ENCODE measurements at regions of chr2 and their contacts with region 1.

Region 1: DNA sequence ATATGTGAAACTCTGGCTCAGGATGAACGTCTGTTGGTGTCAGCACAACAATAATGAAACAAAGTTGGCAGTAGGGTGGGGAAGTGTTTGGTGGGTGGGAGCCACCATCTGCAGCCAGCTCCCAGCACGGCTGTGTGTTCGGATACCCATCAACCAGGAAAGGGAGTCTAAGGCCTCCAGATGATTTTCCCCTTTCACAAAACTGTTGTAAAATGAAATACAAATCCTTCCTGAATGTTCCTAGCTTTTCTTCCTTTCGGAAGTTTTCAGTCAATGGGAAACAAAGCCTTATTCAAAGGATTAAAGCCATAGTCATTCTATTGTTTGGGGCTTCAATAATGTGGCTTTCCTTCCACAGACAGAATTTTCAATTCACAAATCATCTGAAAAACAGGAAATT is 14.5 kb upstream of the DARS1 start:
- DNase-seq: no peak
- ATAC-seq: no peak
- H3K4me3 ChIP-seq: no peak overlapping the region
- H3K27ac ChIP-seq: no peak overlapping the region
- H3K4me1 ChIP-seq: no peaks in the 10 kb centered on the region
- H3K27me3 ChIP-seq: no peaks in the 10 kb centered on the region
- CTCF ChIP-seq: no peak

Region 2: GRCh38 chr2:134508391-134508790 is 1491.5 kb before region 1 on chr2:
- CTCF ChIA-PET with region 1: interaction called, 11 read pairs
- POLR2A ChIA-PET with region 1: no interaction called
- in situ Hi-C with region 1: no loop called
- intact Hi-C with region 1: no loop called
- DNase-seq: no peak
- ATAC-seq: no peak
- H3K4me3 ChIP-seq: no peak overlapping the region
- H3K27ac ChIP-seq: no peak overlapping the region
- H3K4me1 ChIP-seq: no peaks in the 10 kb centered on the region
- H3K27me3 ChIP-seq: peaks cover 9% of the 10 kb centered on the region
- CTCF ChIP-seq: no peak

Region 3: GRCh38 chr2:135829378-135830135 is 170.3 kb before region 1 on chr2:
- CTCF ChIA-PET with region 1: interaction called, 10 read pairs
- POLR2A ChIA-PET with region 1: no interaction called
- in situ Hi-C with region 1: no loop called
- intact Hi-C with region 1: no loop called
- DNase-seq: no peak
- ATAC-seq: 0 out of 2 replicates have a peak, but pooled peaks have one; percentile 19
- H3K4me3 ChIP-seq: no peak overlapping the region
- H3K27ac ChIP-seq: no peak overlapping the region
- H3K4me1 ChIP-seq: no peaks in the 10 kb centered on the region
- H3K27me3 ChIP-seq: no peaks in the 10 kb centered on the region
- CTCF ChIP-seq: no peak